ENCODE measurements at regions of chr11 and their contacts with region 1.

Region 1: GRCh38 chr11:93741094-93741881 is at the starts of genes C11orf54 and TAF1D:
- DNase-seq: peak; percentile 85 to 98 (median 96)
- ATAC-seq: peak; percentile 96
- H3K4me3 ChIP-seq: peak within 1 kb of the TSS; percentile 88
- H3K4me3 Mint-ChIP-seq: peak within 1 kb of the TSS; percentile 95 to 100 (median 100)
- H3K27ac ChIP-seq: peak within 1 kb of the TSS; percentile 84
- H3K27ac Mint-ChIP-seq: peak within 1 kb of the TSS; percentile 98 to 100 (median 100)
- H3K4me1 ChIP-seq: peaks cover 28 to 31% of the 10 kb centered on the region in 2 donors
- H3K4me1 Mint-ChIP-seq: peaks cover 37 to 92% (median 71%) of the 10 kb centered on the region in 7 donors
- H3K27me3 ChIP-seq: no peaks in the 10 kb centered on the region
- H3K27me3 Mint-ChIP-seq: peaks cover 0 to 3% (median 0%) of the 10 kb centered on the region in 5 donors
- total RNA-seq, gene C11orf54: 16.4 to 42.5 (median 27.2) TPM
- total RNA-seq, gene TAF1D: 116 to 197 (median 183) TPM

Region 2: GRCh38 chr11:93113824-93114223 is 627.5 kb before region 1 on chr11:
- CTCF ChIA-PET with region 1: no interaction called
- POLR2A ChIA-PET with region 1: no interaction called
- intact Hi-C with region 1: no loop called
- DNase-seq: no peak
- ATAC-seq: no peak
- H3K4me3 ChIP-seq: no peak overlapping the region
- H3K4me3 Mint-ChIP-seq: no peak overlapping the region
- H3K27ac ChIP-seq: no peak overlapping the region
- H3K27ac Mint-ChIP-seq: no peak overlapping the region
- H3K4me1 ChIP-seq: no peaks in the 10 kb centered on the region
- H3K4me1 Mint-ChIP-seq: peaks cover 0 to 12% (median 0%) of the 10 kb centered on the region in 7 donors
- H3K27me3 ChIP-seq: no peaks in the 10 kb centered on the region
- H3K27me3 Mint-ChIP-seq: peaks cover 18 to 53% (median 35%) of the 10 kb centered on the region in 5 donors

Region 3: DNA sequence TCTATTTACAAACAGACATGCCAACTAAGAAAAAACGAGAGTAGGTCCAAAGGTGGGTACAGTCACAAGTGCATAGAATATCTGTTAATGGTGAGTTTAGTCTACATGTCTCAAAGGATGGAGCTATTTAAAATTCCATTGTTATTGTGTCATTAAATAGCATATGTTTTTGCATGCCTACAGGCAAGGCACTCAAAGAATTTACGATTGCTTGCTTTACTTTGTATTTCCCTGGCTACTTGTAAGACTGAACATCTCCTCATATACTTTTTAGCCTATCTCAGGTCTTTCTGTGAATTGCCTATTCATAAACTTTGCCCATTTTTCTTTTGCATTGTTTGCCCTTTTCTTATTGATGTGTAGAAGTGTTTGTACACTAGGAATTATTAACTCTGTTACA is 371.0 kb before region 1 on chr11:
- CTCF ChIA-PET with region 1: no interaction called
- POLR2A ChIA-PET with region 1: no interaction called
- intact Hi-C with region 1: no loop called
- DNase-seq: no peak
- ATAC-seq: no peak
- H3K4me3 ChIP-seq: no peak overlapping the region
- H3K4me3 Mint-ChIP-seq: no peak overlapping the region
- H3K27ac ChIP-seq: no peak overlapping the region
- H3K27ac Mint-ChIP-seq: no peak overlapping the region
- H3K4me1 ChIP-seq: no peaks in the 10 kb centered on the region
- H3K4me1 Mint-ChIP-seq: no peaks in the 10 kb centered on the region
- H3K27me3 ChIP-seq: no peaks in the 10 kb centered on the region
- H3K27me3 Mint-ChIP-seq: no peaks in the 10 kb centered on the region

Region 4: DNA sequence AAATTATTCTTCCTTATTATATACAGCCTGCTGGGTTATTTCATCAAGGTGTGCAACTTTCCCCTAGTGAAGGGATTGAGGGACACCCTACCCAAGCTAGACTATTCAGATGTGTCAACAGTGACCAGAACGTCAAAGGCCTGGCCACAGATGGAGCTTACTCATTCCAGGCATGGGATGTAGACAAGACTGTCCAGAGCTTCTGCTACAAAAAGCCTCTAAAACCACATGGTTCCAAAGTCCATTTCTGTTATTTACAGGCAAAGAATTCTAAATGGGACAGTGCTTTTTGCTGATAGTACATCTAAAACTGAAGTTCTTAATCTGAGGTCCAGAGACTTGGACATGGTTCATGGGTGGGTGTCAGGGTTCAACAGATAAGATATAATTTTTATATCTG is 188.4 kb before region 1 on chr11:
- CTCF ChIA-PET with region 1: no interaction called
- POLR2A ChIA-PET with region 1: no interaction called
- intact Hi-C with region 1: no loop called
- DNase-seq: no peak
- ATAC-seq: no peak
- H3K4me3 ChIP-seq: no peak overlapping the region
- H3K4me3 Mint-ChIP-seq: no peak overlapping the region
- H3K27ac ChIP-seq: no peak overlapping the region
- H3K27ac Mint-ChIP-seq: no peak overlapping the region
- H3K4me1 ChIP-seq: no peaks in the 10 kb centered on the region
- H3K4me1 Mint-ChIP-seq: peaks cover 0 to 2% (median 0%) of the 10 kb centered on the region in 7 donors
- H3K27me3 ChIP-seq: no peaks in the 10 kb centered on the region
- H3K27me3 Mint-ChIP-seq: peaks cover 16 to 42% (median 37%) of the 10 kb centered on the region in 5 donors

Region 5: GRCh38 chr11:93662177-93662575 is 79.1 kb before region 1 on chr11:
- CTCF ChIA-PET with region 1: no interaction called
- POLR2A ChIA-PET with region 1: interaction called, 14 read pairs
- intact Hi-C with region 1: loop called (anchors 1 kb)
- DNase-seq: no peak
- ATAC-seq: no peak
- H3K4me3 ChIP-seq: peak overlapping the region; percentile 98
- H3K4me3 Mint-ChIP-seq: peak overlapping the region; percentile 76 to 96 (median 88)
- H3K27ac ChIP-seq: peak overlapping the region; percentile 88
- H3K27ac Mint-ChIP-seq: peak overlapping the region; percentile 60 to 95 (median 90)
- H3K4me1 ChIP-seq: peaks cover 8 to 11% of the 10 kb centered on the region in 2 donors
- H3K4me1 Mint-ChIP-seq: peaks cover 0 to 52% (median 37%) of the 10 kb centered on the region in 7 donors
- H3K27me3 ChIP-seq: no peaks in the 10 kb centered on the region
- H3K27me3 Mint-ChIP-seq: peaks cover 0 to 2% (median 0%) of the 10 kb centered on the region in 5 donors

Region 6: DNA sequence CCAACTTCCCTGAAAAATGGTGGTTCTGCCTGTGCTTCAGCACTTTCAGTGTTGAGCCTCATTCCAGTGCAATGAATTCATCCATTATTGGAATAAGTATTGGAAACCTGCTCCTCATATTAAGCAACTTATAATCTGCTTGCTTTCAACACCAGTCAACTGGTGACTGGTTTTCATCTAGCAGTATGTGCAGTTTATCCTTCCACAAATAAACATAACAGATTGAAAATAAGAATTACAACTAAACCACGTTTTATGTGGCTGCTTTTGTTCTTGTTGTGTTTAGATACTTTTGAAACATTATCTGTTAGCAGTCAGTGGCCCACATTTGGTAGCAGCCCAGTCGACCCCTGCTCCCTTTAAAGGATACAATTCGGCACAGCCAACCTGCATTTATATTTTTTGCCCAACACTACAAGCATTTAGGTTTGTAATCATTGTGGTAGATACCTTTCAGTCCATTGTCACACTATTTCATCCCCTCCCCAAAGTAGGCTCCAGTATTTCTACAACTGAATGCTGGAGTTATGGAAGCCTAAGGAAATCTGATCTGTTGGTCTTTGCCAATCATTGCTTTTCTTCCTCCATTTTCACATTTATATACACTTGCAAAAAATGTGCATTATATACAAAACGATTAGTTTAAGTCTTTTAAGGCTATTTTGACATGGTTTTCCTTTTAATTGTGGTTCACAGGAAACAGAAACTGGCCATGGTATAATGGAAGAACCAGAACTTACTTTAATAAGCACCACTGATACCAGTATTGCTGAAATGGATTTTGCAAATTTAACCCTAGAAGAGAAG is 13.1 kb before region 1 on chr11:
- CTCF ChIA-PET with region 1: interaction called, 3 read pairs
- POLR2A ChIA-PET with region 1: interaction called, 32 read pairs
- intact Hi-C with region 1: loop called in 1 of 2 experiments (anchors 1 kb)
- DNase-seq: no peak
- ATAC-seq: no peak
- H3K4me3 ChIP-seq: no peak overlapping the region
- H3K4me3 Mint-ChIP-seq: no peak overlapping the region
- H3K27ac ChIP-seq: no peak overlapping the region
- H3K27ac Mint-ChIP-seq: peak overlapping the region in 6 of 9 donors; percentile 31 to 79 (median 49)
- H3K4me1 ChIP-seq: peaks cover 0 to 3% of the 10 kb centered on the region in 2 donors
- H3K4me1 Mint-ChIP-seq: peaks cover 0 to 21% (median 3%) of the 10 kb centered on the region in 7 donors
- H3K27me3 ChIP-seq: no peaks in the 10 kb centered on the region
- H3K27me3 Mint-ChIP-seq: no peaks in the 10 kb centered on the region

Region 7: GRCh38 chr11:93773045-93773477 is 31.8 kb after region 1 on chr11:
- CTCF ChIA-PET with region 1: no interaction called
- POLR2A ChIA-PET with region 1: no interaction called
- intact Hi-C with region 1: no loop called
- DNase-seq: no peak
- ATAC-seq: no peak
- H3K4me3 ChIP-seq: no peak overlapping the region
- H3K4me3 Mint-ChIP-seq: no peak overlapping the region
- H3K27ac ChIP-seq: no peak overlapping the region
- H3K27ac Mint-ChIP-seq: no peak overlapping the region
- H3K4me1 ChIP-seq: no peaks in the 10 kb centered on the region
- H3K4me1 Mint-ChIP-seq: peaks cover 0 to 1% (median 0%) of the 10 kb centered on the region in 7 donors
- H3K27me3 ChIP-seq: no peaks in the 10 kb centered on the region
- H3K27me3 Mint-ChIP-seq: no peaks in the 10 kb centered on the region

Region 8: GRCh38 chr11:94543695-94544645 is 802.7 kb after region 1 on chr11 and contains the start of gene FUT4:
- CTCF ChIA-PET with region 1: no interaction called
- POLR2A ChIA-PET with region 1: interaction called, 4 read pairs
- intact Hi-C with region 1: loop called in 1 of 2 experiments (anchors 1 kb)
- DNase-seq: peak; percentile 51 to 83 (median 70)
- ATAC-seq: peak; percentile 84
- H3K4me3 ChIP-seq: peak within 1 kb of the TSS; percentile 85
- H3K4me3 Mint-ChIP-seq: peak within 1 kb of the TSS; percentile 93 to 100 (median 98)
- H3K27ac ChIP-seq: peak within 1 kb of the TSS; percentile 88
- H3K27ac Mint-ChIP-seq: peak within 1 kb of the TSS; percentile 96 to 100 (median 99)
- H3K4me1 ChIP-seq: peaks cover 22 to 29% of the 10 kb centered on the region in 2 donors
- H3K4me1 Mint-ChIP-seq: peaks cover 24 to 49% (median 41%) of the 10 kb centered on the region in 7 donors
- H3K27me3 ChIP-seq: no peaks in the 10 kb centered on the region
- H3K27me3 Mint-ChIP-seq: no peaks in the 10 kb centered on the region
- total RNA-seq, gene FUT4: 5.6 to 10.2 (median 6.9) TPM

Measured in naive thymus-derived CD4-positive, alpha-beta T cell (primary cell).